ENCODE measurements at regions of chr10 and their contacts with region 1.

Region 1: GRCh38 chr10:50421026-50421719 is 169.9 kb upstream of the ASAH2 start:
- DNase-seq: peak; percentile 51
- H3K4me3 Mint-ChIP-seq: no peak overlapping the region
- H3K27ac Mint-ChIP-seq: no peak overlapping the region
- H3K4me1 Mint-ChIP-seq: peaks cover 36% of the 10 kb centered on the region
- H3K27me3 Mint-ChIP-seq: peaks cover 4% of the 10 kb centered on the region

Region 2: DNA sequence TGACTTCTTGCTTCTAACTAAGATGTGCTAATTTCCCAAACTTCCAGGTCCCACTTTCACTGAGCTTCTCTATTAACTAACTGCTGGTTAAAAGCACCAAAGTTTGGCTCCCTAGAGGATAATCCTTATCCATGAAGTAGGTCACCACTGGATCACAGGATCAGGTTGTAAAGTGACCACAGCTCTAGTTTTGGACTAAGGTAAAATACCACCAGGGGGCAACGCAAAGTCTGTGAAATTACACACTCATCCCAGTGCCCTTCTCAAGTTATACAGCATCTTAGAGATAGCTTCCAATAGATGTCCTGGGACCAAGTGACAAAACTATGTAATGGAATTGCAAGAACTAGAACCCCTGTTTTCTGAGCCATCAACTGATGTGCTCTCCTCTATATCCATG is 53.4 kb before region 1 on chr10:
- CTCF ChIA-PET with region 1: interaction called, 17 read pairs
- DNase-seq: peak; percentile 24
- H3K4me3 Mint-ChIP-seq: no peak overlapping the region
- H3K27ac Mint-ChIP-seq: no peak overlapping the region
- H3K4me1 Mint-ChIP-seq: peaks cover under 1% of the 10 kb centered on the region
- H3K27me3 Mint-ChIP-seq: no peaks in the 10 kb centered on the region

Region 3: DNA sequence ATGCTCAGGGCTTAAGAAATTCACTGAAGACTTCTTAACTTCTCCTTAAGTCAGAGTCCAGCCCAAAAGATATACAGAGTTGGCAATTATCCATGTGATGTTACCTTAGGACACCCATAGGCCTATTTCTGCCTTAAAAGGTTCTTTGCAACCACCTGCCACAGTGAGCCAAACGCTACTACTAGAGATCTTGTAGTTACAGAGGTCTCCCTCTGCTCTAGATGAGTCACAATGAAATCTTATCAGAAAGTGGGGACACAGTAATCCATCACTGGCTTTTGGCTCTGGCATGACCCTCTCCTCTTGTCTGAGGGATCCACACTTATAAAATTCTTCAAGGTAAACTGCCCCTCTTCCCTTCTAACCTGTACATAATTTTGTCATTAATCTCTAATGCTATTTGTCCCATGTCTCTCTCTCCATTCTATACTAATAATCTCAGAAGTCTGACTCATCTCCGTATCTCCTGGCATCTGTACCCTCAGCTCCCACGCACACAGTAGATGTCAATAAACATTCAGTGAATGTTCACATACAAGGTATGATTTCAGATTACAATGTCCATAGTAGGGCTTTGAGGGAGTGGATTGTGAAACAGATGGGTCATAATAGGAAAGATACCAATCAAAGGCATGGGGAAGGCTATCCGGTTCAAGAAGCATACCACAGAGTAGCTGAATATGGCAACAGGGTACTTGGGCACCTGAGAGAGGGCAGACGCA is 90.5 kb after region 1 on chr10:
- CTCF ChIA-PET with region 1: no interaction called
- DNase-seq: no peak
- H3K4me3 Mint-ChIP-seq: no peak overlapping the region
- H3K27ac Mint-ChIP-seq: no peak overlapping the region
- H3K4me1 Mint-ChIP-seq: peaks cover 38% of the 10 kb centered on the region
- H3K27me3 Mint-ChIP-seq: no peaks in the 10 kb centered on the region